Left lung (tissue), 14 donors: ENCODE measurements at regions of chr12 and their contacts with region 1.

Region 1: GRCh38 chr12:116142936-116143898 is 134.3 kb downstream of the MED13L start:
- DNase-seq: no peak
- ATAC-seq: peak; percentile 63
- H3K4me3 ChIP-seq: no peak overlapping the region
- H3K27ac ChIP-seq: peak overlapping the region in 1 of 2 donors; percentile 60
- H3K4me1 ChIP-seq: peaks cover 14 to 73% of the 10 kb centered on the region in 2 donors
- H3K27me3 ChIP-seq: no peaks in the 10 kb centered on the region
- CTCF ChIP-seq: no peak

Region 2: GRCh38 chr12:116257215-116257614 is 114.0 kb after region 1 on chr12:
- intact Hi-C with region 1: no loop called
- DNase-seq: peak in 1 of 4 donors; percentile 44
- ATAC-seq: peak; percentile 93
- H3K4me3 ChIP-seq: no peak overlapping the region
- H3K27ac ChIP-seq: no peak overlapping the region
- H3K4me1 ChIP-seq: peaks cover 13 to 60% of the 10 kb centered on the region in 2 donors
- H3K27me3 ChIP-seq: no peaks in the 10 kb centered on the region
- CTCF ChIP-seq: no peak

Region 3: DNA sequence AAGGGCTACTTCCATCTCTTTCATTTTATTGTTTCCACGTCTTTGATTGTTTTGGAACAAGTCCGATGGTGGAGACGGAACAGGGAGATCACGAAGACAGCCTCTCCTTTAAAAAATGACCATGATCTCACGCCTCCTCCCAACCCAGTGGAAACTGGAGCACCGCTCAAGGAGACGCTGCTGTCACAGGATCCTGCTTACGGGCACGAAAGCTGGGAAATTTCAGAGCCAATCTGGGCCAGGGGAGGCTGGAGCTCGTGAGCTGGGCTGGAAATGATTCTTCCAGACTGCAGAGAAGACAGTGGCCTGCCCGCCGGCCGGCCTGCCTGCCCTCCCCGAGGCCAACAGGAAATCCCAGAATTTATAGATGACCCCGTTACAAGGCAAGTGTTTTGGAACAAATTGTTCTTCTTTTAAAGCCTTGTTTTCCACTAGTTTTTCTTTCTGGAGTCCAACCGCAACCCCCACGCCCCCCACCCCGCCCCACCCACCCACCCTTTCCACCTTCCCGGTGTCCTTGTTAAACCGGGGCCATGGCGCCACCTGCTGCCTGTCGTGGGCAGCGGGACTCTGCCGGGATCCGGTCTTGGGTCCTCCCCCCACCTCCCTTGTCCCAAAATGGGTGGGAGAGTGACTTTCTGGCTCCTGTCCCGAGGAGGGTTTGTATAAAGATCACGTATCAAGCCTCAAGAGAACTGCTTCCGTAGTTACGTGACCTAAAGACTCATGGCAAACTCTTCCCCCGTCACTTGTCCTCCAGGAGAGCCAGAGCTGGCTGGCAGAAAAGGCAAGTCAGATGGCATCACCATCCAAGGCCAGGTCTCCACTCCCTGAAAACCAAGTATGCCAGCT is 456.3 kb after region 1 on chr12:
- intact Hi-C with region 1: loop called in 1 of 2 experiments (anchors 10 kb)
- DNase-seq: peak in 3 of 4 donors; percentile 81 to 94 (median 85)
- ATAC-seq: peak; percentile 94
- H3K4me3 ChIP-seq: peak overlapping the region in 1 of 2 donors; percentile 28
- H3K27ac ChIP-seq: peak overlapping the region; percentile 70 to 74
- H3K4me1 ChIP-seq: peaks cover 3 to 39% of the 10 kb centered on the region in 2 donors
- H3K27me3 ChIP-seq: no peaks in the 10 kb centered on the region
- CTCF ChIP-seq: peak; percentile 57 to 61